Transverse colon (tissue), 4 donors: ENCODE measurements at regions of chr18 and their contacts with region 1.

Region 1: DNA sequence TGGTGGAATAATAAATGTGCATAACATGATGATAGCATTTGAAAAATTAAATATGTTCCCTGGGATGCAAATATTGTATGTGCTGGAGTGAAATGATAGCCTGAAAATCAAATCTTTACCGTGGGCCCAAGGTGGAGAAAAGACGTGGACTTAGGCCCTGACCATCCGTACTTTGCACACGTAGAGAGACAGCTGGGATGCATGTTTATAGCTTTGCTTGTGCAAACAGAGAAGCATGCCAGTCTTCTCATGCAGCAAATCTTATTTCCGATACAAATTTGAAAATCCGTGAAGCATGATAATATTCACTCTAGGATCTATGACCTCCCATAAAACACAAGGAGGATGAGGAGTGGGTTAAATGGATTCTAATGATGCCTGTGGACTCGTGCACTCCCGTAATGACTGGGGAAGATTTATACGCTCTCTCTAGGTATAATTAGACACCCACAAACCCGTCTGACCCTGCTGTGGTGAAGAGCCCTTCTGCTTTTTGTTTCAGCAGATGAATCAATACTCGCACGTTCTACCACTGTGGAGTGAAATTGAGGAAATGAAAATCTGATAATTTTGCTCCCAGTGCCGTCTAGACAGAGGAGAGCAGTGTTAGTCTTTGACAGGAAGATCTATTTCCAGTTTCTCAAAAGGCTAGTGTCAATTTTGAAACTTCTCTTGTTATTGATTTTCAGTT is 810.3 kb upstream of the SALL3 start:
- DNase-seq: no peak
- H3K4me3 ChIP-seq: no peak overlapping the region
- H3K27ac ChIP-seq: no peak overlapping the region
- H3K4me1 ChIP-seq: no peaks in the 10 kb centered on the region
- H3K27me3 ChIP-seq: no peaks in the 10 kb centered on the region
- CTCF ChIP-seq: no peak
- EP300 ChIP-seq: no peak
- POLR2A ChIP-seq: no peak

Region 2: DNA sequence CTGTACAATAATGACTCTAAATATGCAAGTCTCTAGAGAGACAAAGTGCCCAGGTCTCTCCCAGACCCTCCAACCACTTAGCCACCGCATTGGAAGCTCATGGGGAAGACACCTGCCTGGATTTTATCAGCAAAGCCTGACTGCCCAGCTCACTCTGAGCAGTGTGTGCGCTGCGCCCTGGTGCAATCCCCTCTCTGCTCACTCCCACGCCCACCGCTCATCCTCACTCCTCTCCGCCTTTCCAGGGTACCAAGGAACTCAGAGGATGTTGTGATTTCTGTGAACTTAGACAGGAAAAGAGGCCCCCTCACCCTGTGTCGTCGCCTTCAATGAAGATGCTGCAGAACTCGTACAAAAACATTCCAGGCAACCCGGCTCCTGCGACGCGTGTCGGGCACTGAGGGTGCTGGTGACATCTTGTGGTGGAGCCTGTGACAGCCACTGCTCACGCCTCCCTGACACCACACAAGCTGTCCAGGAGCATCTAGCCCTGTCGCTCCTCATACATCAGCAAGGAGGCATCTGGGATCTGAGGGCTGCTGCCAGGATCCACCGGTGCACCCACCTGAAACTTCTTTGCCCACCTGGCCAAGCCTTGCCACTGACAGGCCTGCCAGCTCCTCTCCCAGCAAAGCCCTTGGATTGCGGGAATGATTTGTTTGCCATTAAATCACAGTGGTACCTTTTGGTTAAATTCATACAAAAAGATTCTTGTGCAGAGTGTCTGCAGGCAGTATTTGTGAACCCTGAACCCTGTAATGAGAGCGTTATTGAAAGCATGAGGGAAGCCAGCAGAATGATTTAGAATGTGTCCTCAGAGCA is 1894.6 kb before region 1 on chr18:
- in situ Hi-C with region 1: loop called in 1 of 4 experiments (anchors 25 kb)
- intact Hi-C with region 1: no loop called
- DNase-seq: no peak
- H3K4me3 ChIP-seq: no peak overlapping the region
- H3K27ac ChIP-seq: no peak overlapping the region
- H3K4me1 ChIP-seq: no peaks in the 10 kb centered on the region
- H3K27me3 ChIP-seq: no peaks in the 10 kb centered on the region
- CTCF ChIP-seq: no peak
- EP300 ChIP-seq: no peak
- POLR2A ChIP-seq: no peak